ENCODE measurements at regions of chr5 and their contacts with region 1.

Region 1: DNA sequence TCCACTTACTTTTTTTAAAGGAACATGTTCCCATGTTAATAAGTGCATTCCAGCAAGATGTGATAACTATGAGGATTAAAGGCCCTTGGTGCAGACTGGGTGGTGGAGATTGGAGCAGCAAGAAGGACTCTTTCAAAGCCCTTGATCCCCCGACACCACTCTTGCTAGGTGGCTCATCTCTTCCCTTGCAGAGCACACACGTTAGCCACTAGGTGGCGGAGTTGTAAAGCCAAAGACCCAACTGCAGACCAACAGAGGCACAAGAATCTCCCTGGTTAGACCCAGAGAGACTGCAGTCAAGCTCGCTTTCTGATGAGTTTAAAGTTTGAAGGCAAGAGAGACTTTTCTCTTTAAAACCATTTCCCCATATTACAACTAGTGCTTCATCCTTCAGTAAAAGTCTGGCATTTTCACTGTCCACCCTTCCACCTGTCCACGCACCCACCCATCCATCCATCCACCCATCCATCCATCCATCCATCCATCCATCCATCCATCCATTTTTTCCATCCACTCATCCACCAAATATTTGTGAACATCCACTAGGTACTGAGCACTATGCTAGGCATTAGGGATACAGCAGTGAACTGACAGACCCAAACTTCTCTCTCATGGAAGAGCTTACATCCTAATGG is 226.9 kb downstream of the MSX2 start:
- DNase-seq: no peak
- ATAC-seq: peak; percentile 88

Region 2: DNA sequence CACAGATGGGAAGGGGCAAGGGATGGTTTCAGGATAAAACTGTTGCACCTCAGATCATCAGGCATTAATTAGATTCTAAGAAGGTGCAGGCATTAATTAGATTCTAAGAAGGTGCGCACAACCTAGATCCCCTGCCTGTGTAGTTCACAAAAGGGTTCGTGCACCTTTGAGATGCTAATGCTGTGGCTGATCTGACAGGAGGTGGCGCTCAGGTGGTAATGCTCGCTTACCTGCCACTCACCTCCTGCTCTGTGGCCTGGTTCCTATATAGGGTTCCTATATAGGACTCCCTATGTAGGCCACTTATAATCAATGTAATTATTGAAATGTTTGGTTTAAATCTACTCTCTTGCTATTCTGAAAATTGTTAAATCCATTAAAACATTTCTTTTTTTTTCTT is 55.9 kb before region 1 on chr5:
- intact Hi-C with region 1: no loop called
- DNase-seq: no peak
- ATAC-seq: no peak

Region 3: GRCh38 chr5:175082866-175083590 is 131.8 kb after region 1 on chr5:
- intact Hi-C with region 1: no loop called
- DNase-seq: no peak
- ATAC-seq: no peak

Region 4: DNA sequence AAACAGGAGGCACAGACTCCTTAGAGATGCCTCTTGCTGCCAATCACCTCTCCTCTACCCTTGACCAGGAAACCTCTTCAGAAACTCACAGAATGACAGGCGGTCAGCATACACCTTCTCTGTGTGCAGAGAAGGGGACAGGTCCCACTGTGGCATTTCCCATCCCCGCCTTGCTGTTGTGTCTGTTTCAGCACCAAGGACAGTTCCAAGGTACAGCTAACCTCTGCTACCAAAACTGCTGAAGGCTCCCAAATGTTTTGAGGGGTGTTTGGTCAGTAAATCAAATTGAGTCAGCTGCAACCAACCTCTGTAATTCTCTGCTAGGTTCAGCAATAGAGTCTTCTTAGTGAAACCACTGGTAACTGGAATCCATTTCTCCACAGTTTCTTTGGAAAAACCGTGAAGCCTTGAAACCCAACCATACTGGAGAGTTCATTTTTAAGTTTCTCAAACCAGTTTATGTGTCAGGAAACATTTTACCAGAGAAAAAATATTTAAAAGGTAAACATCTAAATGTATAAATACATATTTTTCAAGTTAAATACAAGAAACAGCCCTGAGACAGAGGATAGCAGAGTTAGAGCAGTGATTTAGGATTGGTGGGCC is 370.8 kb after region 1 on chr5:
- intact Hi-C with region 1: no loop called
- DNase-seq: no peak
- ATAC-seq: no peak

Region 5: DNA sequence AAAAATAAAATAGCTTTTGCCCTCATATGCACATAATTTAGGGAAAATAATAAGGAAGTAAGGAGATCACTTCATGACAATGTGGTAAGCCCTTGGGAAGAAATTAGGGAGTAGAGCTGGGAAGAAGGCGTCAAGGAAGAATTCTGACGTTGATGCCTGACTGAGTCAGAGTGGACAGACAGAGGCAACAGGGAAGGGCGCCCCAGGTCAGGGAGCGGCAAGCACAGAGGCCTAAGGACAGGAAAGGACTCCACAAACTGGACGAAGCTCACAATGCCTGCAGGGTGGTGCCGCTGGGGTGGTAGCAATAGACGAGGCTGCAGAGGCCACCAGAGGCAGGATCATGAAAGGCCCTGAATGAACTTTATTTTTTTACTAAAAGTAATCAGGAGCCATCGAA is 485.1 kb after region 1 on chr5:
- intact Hi-C with region 1: loop called (anchors 2 kb)
- DNase-seq: no peak
- ATAC-seq: no peak

Measured in Right ventricle myocardium superior (tissue), 1 donor.